Vagina (tissue), 2 donors: ENCODE measurements at regions of chr4 and their contacts with region 1.

Region 1: GRCh38 chr4:75724066-75724866 is at the start of gene USO1:
- DNase-seq: peak; percentile 99
- H3K4me3 ChIP-seq: peak within 1 kb of the TSS; percentile 70 to 95
- H3K27ac ChIP-seq: peak within 1 kb of the TSS; percentile 95
- H3K4me1 ChIP-seq: peaks cover 51% of the 10 kb centered on the region
- H3K27me3 ChIP-seq: no peaks in the 10 kb centered on the region
- CTCF ChIP-seq: peak; percentile 25 to 51 (median 41)
- POLR2A ChIP-seq: peak; percentile 52 to 97
- total RNA-seq, gene USO1: 47.9 TPM

Region 2: GRCh38 chr4:75673027-75673958 is 51.0 kb before region 1 on chr4 and contains the start of gene G3BP2:
- intact Hi-C with region 1: loop called (anchors 2 kb)
- DNase-seq: peak; percentile 99
- H3K4me3 ChIP-seq: peak within 1 kb of the TSS; percentile 62 to 96
- H3K27ac ChIP-seq: peak within 1 kb of the TSS; percentile 95
- H3K4me1 ChIP-seq: peaks cover 48% of the 10 kb centered on the region
- H3K27me3 ChIP-seq: no peaks in the 10 kb centered on the region
- CTCF ChIP-seq: no peak
- POLR2A ChIP-seq: peak; percentile 83 to 87
- total RNA-seq, gene G3BP2: 53.5 TPM

Region 3: DNA sequence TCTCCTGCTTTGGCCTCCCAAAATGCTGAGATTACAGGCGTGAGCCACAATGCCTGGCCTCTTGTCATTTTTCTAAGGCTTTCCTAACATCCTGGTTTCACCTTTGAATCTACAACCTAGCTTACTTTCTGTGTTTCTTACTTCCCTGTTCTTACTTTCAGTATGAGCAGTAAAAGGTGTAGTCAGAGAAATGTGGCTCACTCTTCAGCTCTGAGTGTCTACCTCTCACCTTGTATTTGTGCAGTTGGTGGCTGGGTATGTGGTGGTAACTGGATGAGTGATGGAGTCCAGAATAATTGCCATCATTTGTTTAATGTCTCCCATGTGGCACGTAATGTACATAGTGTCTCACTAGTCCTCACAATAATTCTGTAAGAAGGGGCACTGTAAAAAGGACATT is 330.8 kb after region 1 on chr4:
- intact Hi-C with region 1: no loop called
- DNase-seq: no peak
- H3K4me3 ChIP-seq: no peak overlapping the region
- H3K27ac ChIP-seq: no peak overlapping the region
- H3K4me1 ChIP-seq: no peaks in the 10 kb centered on the region
- H3K27me3 ChIP-seq: no peaks in the 10 kb centered on the region
- CTCF ChIP-seq: no peak
- POLR2A ChIP-seq: no peak